Sciatic nerve (tissue), 2 donors: ENCODE measurements at regions of chr9 and their contacts with region 1.

Region 1: GRCh38 chr9:15519831-15520230 is 9.1 kb upstream of the PSIP1 start:
- DNase-seq: no peak
- ATAC-seq: no peak

Region 2: DNA sequence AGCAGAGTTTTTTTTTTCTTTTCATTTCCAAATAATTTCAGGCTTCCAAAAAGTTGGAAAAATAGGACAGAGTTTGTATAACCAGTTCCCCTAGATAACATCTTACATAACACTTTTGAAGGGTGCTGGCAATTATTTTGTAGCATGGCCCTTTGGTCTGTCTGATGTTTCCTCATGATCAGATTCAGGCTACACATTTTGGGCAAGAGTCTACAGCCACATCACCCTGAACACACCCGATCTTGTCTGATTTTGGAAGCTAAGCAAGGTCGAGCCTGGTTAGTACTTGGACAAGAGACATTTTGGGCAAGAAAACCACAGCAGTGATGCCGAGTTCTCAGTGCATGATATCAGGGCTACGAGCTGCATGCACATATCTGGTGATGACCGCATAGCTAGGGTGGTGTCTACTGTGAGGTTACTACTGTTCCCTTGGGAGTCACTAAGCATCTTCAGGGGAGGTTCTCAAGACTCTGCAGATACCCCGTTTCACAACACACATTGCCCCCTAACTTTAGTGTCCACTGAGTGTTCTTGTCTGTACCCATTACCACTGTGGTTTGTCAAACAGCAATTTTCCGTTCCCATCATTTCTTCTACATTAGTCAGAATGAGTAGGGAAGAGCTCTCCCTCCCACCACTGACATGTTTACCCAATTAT is 299.0 kb before region 1 on chr9:
- intact Hi-C with region 1: loop called (anchors 5 kb)
- DNase-seq: no peak
- ATAC-seq: peak; percentile 76